ENCODE measurements at regions of chr9 and their contacts with region 1.

Region 1: GRCh38 chr9:34493972-34494535 is 28.7 kb downstream of the ENHO start:
- DNase-seq: peak in 3 of 5 donors; percentile 78 to 82 (median 82)
- H3K4me3 ChIP-seq: no peak overlapping the region
- H3K27ac ChIP-seq: no peak overlapping the region
- H3K4me1 ChIP-seq: no peaks in the 10 kb centered on the region
- H3K27me3 ChIP-seq: no peaks in the 10 kb centered on the region
- CTCF ChIP-seq: no peak

Region 2: GRCh38 chr9:34446468-34446891 is 47.6 kb before region 1 on chr9:
- intact Hi-C with region 1: loop called (anchors 10 kb)
- DNase-seq: no peak
- H3K4me3 ChIP-seq: no peak overlapping the region
- H3K27ac ChIP-seq: no peak overlapping the region
- H3K4me1 ChIP-seq: peaks cover 0 to 2% (median 0%) of the 10 kb centered on the region in 3 donors
- H3K27me3 ChIP-seq: no peaks in the 10 kb centered on the region
- CTCF ChIP-seq: no peak